GM10248 (cell line): ENCODE measurements at regions of chr4 and their contacts with region 1.

Region 1: DNA sequence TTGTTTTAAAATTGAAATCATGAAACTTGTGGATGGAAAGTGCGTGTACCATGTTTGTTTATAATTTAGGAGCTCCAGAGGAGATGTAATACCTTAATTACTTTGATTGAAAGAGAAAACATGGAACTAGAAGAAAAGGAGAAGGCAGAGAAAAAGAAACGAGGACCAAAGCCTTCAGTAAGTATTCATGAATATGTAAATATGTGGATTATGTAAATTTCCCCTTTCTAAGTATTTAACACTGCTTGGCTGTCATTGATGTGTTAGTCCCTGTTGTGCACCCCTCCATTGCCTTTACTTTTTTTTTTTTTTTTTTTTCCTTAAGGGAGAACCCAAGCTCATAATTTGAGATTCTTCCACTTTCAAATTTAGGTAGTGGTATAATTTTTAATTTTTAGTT is 36.4 kb downstream of the SMARCA5 start:
- DNase-seq: no peak
- CTCF ChIP-seq: no peak

Region 2: GRCh38 chr4:143458966-143459365 is 91.0 kb before region 1 on chr4:
- CTCF ChIA-PET with region 1: no interaction called
- POLR2A ChIA-PET with region 1: no interaction called
- DNase-seq: no peak
- CTCF ChIP-seq: no peak

Region 3: GRCh38 chr4:143531380-143531779 is 18.5 kb before region 1 on chr4:
- CTCF ChIA-PET with region 1: interaction called, 25 read pairs
- POLR2A ChIA-PET with region 1: no interaction called
- DNase-seq: no peak
- CTCF ChIP-seq: peak; percentile 20

Region 4: GRCh38 chr4:143581331-143581946 is 31.5 kb after region 1 on chr4:
- CTCF ChIA-PET with region 1: no interaction called
- POLR2A ChIA-PET with region 1: no interaction called
- DNase-seq: no peak
- CTCF ChIP-seq: no peak